ENCODE measurements at regions of chr13 and their contacts with region 1.

Region 1: DNA sequence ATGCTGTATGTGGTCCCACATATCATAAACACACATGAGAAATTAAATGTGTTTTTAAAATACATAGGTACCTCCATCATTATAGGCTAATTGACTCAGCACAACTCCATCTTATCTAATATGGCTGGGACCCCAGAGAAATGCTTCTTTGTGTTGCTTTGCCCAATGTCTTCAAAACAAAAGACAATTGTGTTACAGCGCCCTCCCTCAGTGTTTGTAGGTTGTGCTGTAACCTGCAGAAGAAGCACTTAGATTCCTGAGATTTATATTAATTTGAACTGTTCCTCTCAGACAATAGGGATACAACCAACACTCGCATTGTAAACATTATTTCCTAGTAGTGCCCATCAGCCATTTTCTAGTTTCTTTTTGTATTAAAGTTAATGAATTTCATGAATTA is 303.4 kb downstream of the MZT1 start:
- DNase-seq: no peak
- ATAC-seq: no peak
- H3K4me3 ChIP-seq: no peak overlapping the region
- H3K27ac ChIP-seq: no peak overlapping the region
- H3K4me1 ChIP-seq: no peaks in the 10 kb centered on the region
- H3K27me3 ChIP-seq: no peaks in the 10 kb centered on the region
- CTCF ChIP-seq: no peak
- EP300 ChIP-seq: no peak
- POLR2A ChIP-seq: no peak
- RAD21 ChIP-seq: no peak

Region 2: GRCh38 chr13:72399351-72399750 is 24.7 kb before region 1 on chr13:
- CTCF ChIA-PET with region 1: no interaction called
- POLR2A ChIA-PET with region 1: no interaction called
- in situ Hi-C with region 1: no loop called
- intact Hi-C with region 1: loop called (anchors 1 kb)
- DNase-seq: no peak
- ATAC-seq: no peak
- H3K4me3 ChIP-seq: no peak overlapping the region
- H3K27ac ChIP-seq: no peak overlapping the region
- H3K4me1 ChIP-seq: no peaks in the 10 kb centered on the region
- H3K27me3 ChIP-seq: no peaks in the 10 kb centered on the region; a peak in 1 of 5 replicates
- CTCF ChIP-seq: no peak
- EP300 ChIP-seq: no peak
- POLR2A ChIP-seq: no peak
- RAD21 ChIP-seq: no peak